ENCODE measurements at regions of chrX and their contacts with region 1.

Region 1: DNA sequence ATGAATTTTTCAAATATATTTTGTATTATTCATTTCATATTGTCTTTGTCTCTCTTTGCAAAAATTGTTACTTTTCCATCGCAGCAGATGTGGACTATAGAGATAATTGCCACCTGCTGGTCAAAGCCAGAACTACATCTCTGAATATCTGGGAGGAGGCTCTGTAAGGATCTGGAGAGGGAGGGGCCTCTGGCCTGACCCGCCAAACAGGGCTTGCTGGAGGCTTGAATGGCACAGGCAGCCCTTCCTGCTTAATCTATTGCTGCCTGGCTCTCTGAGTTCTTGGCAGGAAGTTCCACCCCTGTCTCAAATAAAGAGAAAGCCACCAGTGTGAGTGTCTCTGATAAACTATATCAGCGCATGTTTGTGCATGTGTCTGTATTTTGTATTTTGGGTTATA is 132.4 kb downstream of the ZMAT1 start:
- DNase-seq: peak; percentile 81 to 83
- ATAC-seq: peak; percentile 100

Region 2: DNA sequence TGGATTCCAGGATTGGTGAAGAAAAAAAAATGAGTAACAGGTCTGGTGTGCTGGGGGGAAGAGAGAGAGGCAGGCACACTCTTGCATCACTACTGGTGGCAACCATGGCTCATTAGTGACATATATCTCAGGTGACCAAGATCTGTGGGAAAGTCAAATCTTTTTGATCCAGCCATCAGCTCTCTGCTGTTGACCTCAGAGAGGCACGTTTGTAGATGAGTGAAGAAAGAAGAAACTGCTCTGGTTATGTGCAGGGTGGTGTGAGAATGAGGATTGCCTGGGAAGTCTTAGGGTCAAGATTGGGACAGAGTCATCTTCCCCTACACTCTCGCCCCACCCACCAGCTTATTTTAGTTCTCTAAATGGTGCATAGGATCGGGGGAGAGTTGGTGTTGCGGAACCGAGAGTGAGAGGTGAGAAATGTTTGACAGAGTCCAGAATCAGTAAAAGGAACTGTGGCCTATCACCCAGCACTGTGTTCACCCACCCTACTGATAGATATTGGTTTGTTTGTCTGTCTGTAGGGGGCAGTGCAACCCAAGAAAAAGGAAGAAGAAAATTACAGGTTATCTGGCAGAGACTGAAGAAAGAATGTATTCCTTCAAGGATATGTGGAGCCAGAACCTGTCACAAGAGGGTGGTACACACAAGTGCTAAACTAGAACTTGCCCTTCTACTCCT is 203.5 kb before region 1 on chrX:
- intact Hi-C with region 1: loop called in 1 of 2 experiments (anchors 5 kb)
- DNase-seq: no peak
- ATAC-seq: peak; percentile 78

Region 3: DNA sequence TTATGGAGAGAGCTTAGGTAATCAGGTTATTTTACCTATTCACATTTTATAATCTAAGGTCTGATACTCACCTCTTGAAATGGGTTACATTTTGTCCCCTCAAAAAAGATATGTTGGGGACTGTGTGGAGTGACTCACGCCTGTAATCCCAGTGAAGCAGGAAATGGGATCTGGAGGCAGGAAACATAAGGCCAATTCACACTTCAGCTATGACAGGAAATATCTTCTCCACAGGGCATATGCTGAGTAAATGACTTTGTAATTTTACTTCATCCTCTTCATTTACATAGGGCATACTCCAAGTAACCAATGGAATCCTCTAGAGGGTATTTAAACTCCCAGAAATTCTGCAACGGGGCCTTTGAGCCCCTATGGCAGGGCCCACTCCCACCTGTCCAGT is 187.2 kb after region 1 on chrX:
- intact Hi-C with region 1: no loop called
- DNase-seq: no peak
- ATAC-seq: no peak

Measured in left colon (tissue), 2 donors.